B cell (primary cell): ENCODE measurements at regions of chr11 and their contacts with region 1.

Region 1: GRCh38 chr11:66466225-66467027 is at the start of gene PELI3:
- DNase-seq: peak; percentile 97
- ATAC-seq: peak; percentile 92
- H3K4me3 ChIP-seq: peak within 1 kb of the TSS; percentile 19 to 82 (median 71)
- H3K4me3 Mint-ChIP-seq: peak within 1 kb of the TSS; percentile 95
- H3K27ac ChIP-seq: peak within 1 kb of the TSS; percentile 81 to 84
- H3K27ac Mint-ChIP-seq: peak within 1 kb of the TSS; percentile 89
- H3K4me1 ChIP-seq: peaks cover 35 to 40% of the 10 kb centered on the region in 2 donors
- H3K4me1 Mint-ChIP-seq: peaks cover 35% of the 10 kb centered on the region
- H3K27me3 ChIP-seq: no peaks in the 10 kb centered on the region
- H3K27me3 Mint-ChIP-seq: no peaks in the 10 kb centered on the region
- CTCF ChIP-seq: no peak
- total RNA-seq, gene PELI3: 15.6 and 17.0 TPM in 2 replicates

Region 2: GRCh38 chr11:66288671-66289547 is 177.5 kb before region 1 on chr11 and contains the start of gene YIF1A:
- CTCF ChIA-PET with region 1: no interaction called
- POLR2A ChIA-PET with region 1: no interaction called
- intact Hi-C with region 1: loop called (anchors 1 kb)
- DNase-seq: peak; percentile 99
- ATAC-seq: peak; percentile 93
- H3K4me3 ChIP-seq: peak within 1 kb of the TSS; percentile 53 to 92 (median 77)
- H3K4me3 Mint-ChIP-seq: peak within 1 kb of the TSS; percentile 95
- H3K27ac ChIP-seq: peak within 1 kb of the TSS; percentile 65 to 88
- H3K27ac Mint-ChIP-seq: peak within 1 kb of the TSS; percentile 94
- H3K4me1 ChIP-seq: peaks cover 34 to 42% of the 10 kb centered on the region in 2 donors
- H3K4me1 Mint-ChIP-seq: peaks cover 37% of the 10 kb centered on the region
- H3K27me3 ChIP-seq: peaks cover 2 to 33% (median 15%) of the 10 kb centered on the region in 4 experiments
- H3K27me3 Mint-ChIP-seq: peaks cover 12% of the 10 kb centered on the region
- CTCF ChIP-seq: peak; percentile 21
- total RNA-seq, gene YIF1A: 43.9 and 47.6 TPM in 2 replicates

Region 3: GRCh38 chr11:66480117-66480938 is 13.9 kb after region 1 on chr11 and contains the start of gene DPP3:
- CTCF ChIA-PET with region 1: interaction called, 41 read pairs
- POLR2A ChIA-PET with region 1: interaction called, 18 read pairs
- intact Hi-C with region 1: loop called (anchors 1 kb)
- DNase-seq: peak; percentile 96
- ATAC-seq: peak; percentile 97
- H3K4me3 ChIP-seq: peak within 1 kb of the TSS; percentile 36 to 92 (median 71)
- H3K4me3 Mint-ChIP-seq: peak within 1 kb of the TSS; percentile 92
- H3K27ac ChIP-seq: peak within 1 kb of the TSS; percentile 63 to 85
- H3K27ac Mint-ChIP-seq: peak within 1 kb of the TSS; percentile 93
- H3K4me1 ChIP-seq: peaks cover 10 to 20% of the 10 kb centered on the region in 2 donors
- H3K4me1 Mint-ChIP-seq: peaks cover 20% of the 10 kb centered on the region
- H3K27me3 ChIP-seq: no peaks in the 10 kb centered on the region
- H3K27me3 Mint-ChIP-seq: no peaks in the 10 kb centered on the region
- CTCF ChIP-seq: no peak
- total RNA-seq, gene DPP3: 21.5 and 22.7 TPM in 2 replicates

Region 4: GRCh38 chr11:66495401-66495844 is 29.0 kb after region 1 on chr11:
- CTCF ChIA-PET with region 1: no interaction called
- POLR2A ChIA-PET with region 1: no interaction called
- intact Hi-C with region 1: no loop called
- DNase-seq: no peak
- ATAC-seq: no peak
- H3K4me3 ChIP-seq: no peak overlapping the region
- H3K4me3 Mint-ChIP-seq: no peak overlapping the region
- H3K27ac ChIP-seq: no peak overlapping the region
- H3K27ac Mint-ChIP-seq: no peak overlapping the region
- H3K4me1 ChIP-seq: no peaks in the 10 kb centered on the region
- H3K4me1 Mint-ChIP-seq: no peaks in the 10 kb centered on the region
- H3K27me3 ChIP-seq: no peaks in the 10 kb centered on the region
- H3K27me3 Mint-ChIP-seq: no peaks in the 10 kb centered on the region
- CTCF ChIP-seq: no peak

Region 5: DNA sequence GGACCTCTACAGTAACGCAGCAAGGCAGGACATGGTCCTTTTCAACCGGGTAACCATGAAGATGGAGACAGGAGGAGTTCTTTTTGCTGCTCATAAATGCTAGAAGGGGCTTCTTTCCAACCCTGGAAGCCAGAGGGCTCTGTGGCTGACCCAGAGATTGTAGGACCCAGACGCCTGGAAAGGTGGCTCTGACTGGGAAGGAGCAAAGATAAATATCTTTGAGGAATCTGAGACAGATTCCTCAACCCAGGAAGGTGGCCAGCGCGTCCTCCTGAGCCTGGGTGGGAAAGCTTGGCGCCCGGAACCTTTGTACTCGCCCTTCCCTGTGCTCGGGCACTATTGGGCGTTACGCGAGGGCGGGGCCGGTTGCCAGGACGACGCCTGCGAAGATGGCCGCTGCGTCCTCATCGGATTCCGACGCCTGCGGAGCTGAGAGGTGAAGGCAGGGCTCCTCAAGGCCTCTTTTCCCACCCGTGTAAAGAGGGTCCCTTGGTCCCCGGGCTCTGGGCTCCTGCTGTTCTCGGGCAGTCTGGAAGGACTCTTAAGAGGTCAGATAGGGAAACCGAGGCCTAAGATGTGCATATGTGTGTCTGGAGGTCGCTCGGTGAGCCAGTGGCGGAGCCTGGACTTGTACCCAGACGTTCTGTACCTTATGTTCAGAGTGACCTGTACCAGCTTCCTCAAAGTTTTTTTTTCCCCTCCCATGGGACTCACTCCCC is 44.0 kb after region 1 on chr11 and contains the start of gene BBS1:
- CTCF ChIA-PET with region 1: interaction called, 3 read pairs
- POLR2A ChIA-PET with region 1: interaction called, 4 read pairs
- intact Hi-C with region 1: loop called (anchors 1 kb)
- DNase-seq: peak; percentile 87
- ATAC-seq: peak; percentile 94
- H3K4me3 ChIP-seq: peak within 1 kb of the TSS; percentile 55 to 89 (median 85)
- H3K4me3 Mint-ChIP-seq: peak within 1 kb of the TSS; percentile 91
- H3K27ac ChIP-seq: peak within 1 kb of the TSS in 1 of 2 donors; percentile 40
- H3K27ac Mint-ChIP-seq: peak within 1 kb of the TSS; percentile 61
- H3K4me1 ChIP-seq: peaks cover 11 to 14% of the 10 kb centered on the region in 2 donors
- H3K4me1 Mint-ChIP-seq: peaks cover 16% of the 10 kb centered on the region
- H3K27me3 ChIP-seq: no peaks in the 10 kb centered on the region
- H3K27me3 Mint-ChIP-seq: no peaks in the 10 kb centered on the region
- CTCF ChIP-seq: no peak
- total RNA-seq, gene BBS1: 52.5 and 56.3 TPM in 2 replicates

Region 6: GRCh38 chr11:66744485-66745340 is 278.3 kb after region 1 on chr11:
- CTCF ChIA-PET with region 1: no interaction called
- POLR2A ChIA-PET with region 1: interaction called, 4 read pairs
- intact Hi-C with region 1: loop called (anchors 1 kb)
- DNase-seq: peak; percentile 95
- ATAC-seq: peak; percentile 88
- H3K4me3 ChIP-seq: peak overlapping the region; percentile 70 to 97 (median 95)
- H3K4me3 Mint-ChIP-seq: peak overlapping the region; percentile 96
- H3K27ac ChIP-seq: peak overlapping the region; percentile 68 to 88
- H3K27ac Mint-ChIP-seq: peak overlapping the region; percentile 94
- H3K4me1 ChIP-seq: peaks cover 7 to 16% of the 10 kb centered on the region in 2 donors
- H3K4me1 Mint-ChIP-seq: peaks cover 32% of the 10 kb centered on the region
- H3K27me3 ChIP-seq: no peaks in the 10 kb centered on the region
- H3K27me3 Mint-ChIP-seq: no peaks in the 10 kb centered on the region
- CTCF ChIP-seq: no peak